ENCODE measurements at regions of chr15 and their contacts with region 1.

Region 1: DNA sequence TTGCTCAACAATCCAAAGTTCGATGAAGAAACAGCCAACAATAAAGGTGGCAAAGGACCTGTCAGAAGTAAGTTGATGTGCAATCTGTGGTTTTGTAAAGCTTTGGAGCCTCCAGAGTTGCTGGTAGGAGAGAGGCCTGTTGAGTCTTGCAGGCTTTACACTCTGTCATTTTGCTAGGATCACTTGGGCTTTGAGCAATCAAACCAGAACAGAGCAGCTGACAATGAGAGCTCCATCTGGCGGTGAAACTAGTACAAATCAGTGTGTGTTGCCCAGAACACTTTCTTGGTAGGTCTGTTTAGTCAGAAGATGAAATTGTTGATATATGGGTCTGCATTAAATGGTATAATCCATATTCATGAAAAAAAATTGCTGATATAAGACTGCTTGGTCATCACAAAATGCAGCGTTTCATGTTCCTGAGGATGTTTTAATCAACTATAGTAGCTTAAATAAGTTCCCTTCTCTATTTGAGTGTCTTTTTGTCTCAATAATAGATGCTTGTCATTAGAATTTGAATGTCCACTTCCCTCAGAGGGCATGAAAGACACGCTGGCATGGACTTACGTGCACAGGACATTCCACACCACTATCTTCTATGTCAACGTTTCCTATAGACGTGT is 25.7 kb downstream of the TMOD2 start:
- DNase-seq: peak; percentile 70
- CTCF ChIP-seq: peak; percentile 73

Region 2: GRCh38 chr15:51649659-51650521 is 127.2 kb before region 1 on chr15:
- CTCF ChIA-PET with region 1: interaction called, 168 read pairs
- POLR2A ChIA-PET with region 1: no interaction called
- DNase-seq: peak; percentile 64
- CTCF ChIP-seq: peak; percentile 68

Region 3: GRCh38 chr15:51672155-51672687 is 104.8 kb before region 1 on chr15:
- CTCF ChIA-PET with region 1: interaction called, 21 read pairs
- POLR2A ChIA-PET with region 1: no interaction called
- DNase-seq: no peak
- CTCF ChIP-seq: no peak

Region 4: DNA sequence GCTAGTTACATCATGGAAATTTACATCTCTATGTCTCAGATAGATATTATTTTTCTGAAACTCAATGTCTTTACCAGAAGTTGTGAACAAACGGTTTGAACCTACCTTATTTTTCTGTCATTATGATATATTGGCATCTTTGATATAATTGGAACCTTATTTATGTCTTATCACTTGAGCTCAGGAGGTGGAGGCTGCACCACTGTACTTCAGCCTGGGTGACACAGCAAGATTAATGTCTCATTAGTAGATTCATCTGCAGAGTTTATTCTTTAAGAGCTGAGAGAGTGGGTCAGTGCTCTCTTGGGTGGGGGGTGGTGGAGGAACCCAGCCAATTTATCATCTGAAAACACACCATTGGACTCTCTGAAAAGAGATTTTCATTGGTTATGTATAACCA is 74.4 kb before region 1 on chr15:
- CTCF ChIA-PET with region 1: interaction called, 14 read pairs
- POLR2A ChIA-PET with region 1: no interaction called
- DNase-seq: no peak
- CTCF ChIP-seq: no peak

Region 5: GRCh38 chr15:51737280-51738017 is 39.6 kb before region 1 on chr15 and contains the start of gene LYSMD2:
- CTCF ChIA-PET with region 1: interaction called, 23 read pairs
- POLR2A ChIA-PET with region 1: no interaction called
- DNase-seq: peak; percentile 74
- CTCF ChIP-seq: no peak

Region 6: DNA sequence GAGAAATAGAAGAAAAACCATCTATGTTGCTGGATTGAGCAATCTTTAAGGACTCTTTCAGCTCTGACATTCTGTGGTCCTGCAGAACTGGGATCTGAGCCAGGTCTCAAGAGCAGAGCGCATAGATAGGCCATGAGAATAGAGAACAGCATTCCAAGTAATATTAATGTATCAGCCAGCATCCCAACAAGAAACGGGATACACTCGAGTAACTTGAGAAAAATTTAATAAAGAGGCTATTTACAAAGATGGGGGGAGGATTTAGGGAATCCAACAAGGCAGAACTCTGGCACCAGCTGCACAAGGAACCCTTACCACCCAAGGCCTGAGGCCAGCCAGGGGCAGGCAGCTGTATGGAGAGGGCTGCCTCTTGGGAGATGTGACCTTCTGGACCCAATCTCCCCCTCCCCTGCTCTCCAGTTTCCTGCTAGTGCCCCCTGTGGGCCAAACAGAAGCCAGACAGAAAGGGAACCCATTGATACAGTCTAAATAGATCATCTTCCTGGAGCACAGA is 17.4 kb before region 1 on chr15:
- CTCF ChIA-PET with region 1: interaction called, 41 read pairs
- POLR2A ChIA-PET with region 1: no interaction called
- DNase-seq: no peak
- CTCF ChIP-seq: peak; percentile 24

Region 7: GRCh38 chr15:51806123-51806522 is 29.1 kb after region 1 on chr15:
- CTCF ChIA-PET with region 1: no interaction called
- POLR2A ChIA-PET with region 1: no interaction called
- DNase-seq: no peak
- CTCF ChIP-seq: no peak

Region 8: DNA sequence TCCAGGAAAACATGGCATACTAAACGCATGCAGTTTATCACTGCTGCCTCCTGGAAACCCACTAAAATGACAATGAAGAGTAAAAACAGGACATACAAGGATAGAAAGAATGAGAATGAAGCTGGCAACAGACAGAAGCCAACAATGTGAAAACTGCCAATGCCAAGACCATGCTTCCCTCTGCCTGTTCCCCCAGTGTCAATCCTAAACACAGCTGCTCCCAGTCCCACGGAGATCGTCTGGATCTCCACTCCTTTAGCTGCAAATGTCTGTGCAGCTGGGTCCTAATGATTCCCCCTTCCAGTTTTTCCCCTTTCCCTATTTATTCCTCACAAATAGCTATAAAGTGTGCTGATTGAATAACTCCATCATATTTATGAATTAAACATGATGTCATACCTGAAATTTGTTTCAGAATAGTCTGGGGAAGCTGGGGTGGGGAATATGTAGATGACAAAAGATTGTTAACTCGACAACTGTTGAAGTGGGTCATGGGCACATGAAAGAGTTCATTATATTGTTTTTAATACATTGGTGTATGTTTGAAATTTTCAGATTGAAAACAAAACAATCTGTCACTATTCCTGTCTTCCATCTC is 178.5 kb after region 1 on chr15:
- CTCF ChIA-PET with region 1: no interaction called
- POLR2A ChIA-PET with region 1: no interaction called
- DNase-seq: no peak
- CTCF ChIP-seq: no peak

Measured in GM10248 (cell line).